K562 (cell line): ENCODE measurements at regions of chr9 and their contacts with region 1.

Region 1: GRCh38 chr9:20209391-20210340 is 412.6 kb downstream of the MLLT3 start:
- DNase-seq: no peak
- ATAC-seq: no peak
- H3K4me3 ChIP-seq: no peak overlapping the region
- H3K27ac ChIP-seq: no peak overlapping the region
- H3K4me1 ChIP-seq: no peaks in the 10 kb centered on the region
- H3K27me3 ChIP-seq: no peaks in the 10 kb centered on the region
- CTCF ChIP-seq: no peak
- EP300 ChIP-seq: no peak
- POLR2A ChIP-seq: no peak
- RAD21 ChIP-seq: no peak

Region 2: GRCh38 chr9:20065796-20066700 is 143.6 kb before region 1 on chr9:
- CTCF ChIA-PET with region 1: no interaction called
- POLR2A ChIA-PET with region 1: no interaction called
- in situ Hi-C with region 1: no loop called
- intact Hi-C with region 1: no loop called
- DNase-seq: no peak
- ATAC-seq: no peak
- H3K4me3 ChIP-seq: no peak overlapping the region
- H3K27ac ChIP-seq: no peak overlapping the region
- H3K4me1 ChIP-seq: no peaks in the 10 kb centered on the region
- H3K27me3 ChIP-seq: no peaks in the 10 kb centered on the region
- CTCF ChIP-seq: no peak
- EP300 ChIP-seq: no peak
- POLR2A ChIP-seq: no peak
- RAD21 ChIP-seq: no peak

Region 3: GRCh38 chr9:20152151-20152725 is 57.4 kb before region 1 on chr9:
- CTCF ChIA-PET with region 1: no interaction called
- POLR2A ChIA-PET with region 1: no interaction called
- in situ Hi-C with region 1: no loop called
- intact Hi-C with region 1: loop called (anchors 10 kb)
- DNase-seq: no peak
- ATAC-seq: no peak
- H3K4me3 ChIP-seq: no peak overlapping the region
- H3K27ac ChIP-seq: no peak overlapping the region
- H3K4me1 ChIP-seq: no peaks in the 10 kb centered on the region
- H3K27me3 ChIP-seq: no peaks in the 10 kb centered on the region
- CTCF ChIP-seq: no peak
- EP300 ChIP-seq: no peak
- POLR2A ChIP-seq: no peak
- RAD21 ChIP-seq: no peak

Region 4: GRCh38 chr9:20220286-20220685 is 10.6 kb after region 1 on chr9:
- CTCF ChIA-PET with region 1: no interaction called
- POLR2A ChIA-PET with region 1: no interaction called
- in situ Hi-C with region 1: no loop called
- intact Hi-C with region 1: no loop called
- DNase-seq: no peak
- ATAC-seq: no peak
- H3K4me3 ChIP-seq: no peak overlapping the region
- H3K27ac ChIP-seq: no peak overlapping the region
- H3K4me1 ChIP-seq: no peaks in the 10 kb centered on the region
- H3K27me3 ChIP-seq: no peaks in the 10 kb centered on the region
- CTCF ChIP-seq: no peak
- EP300 ChIP-seq: no peak
- POLR2A ChIP-seq: no peak
- RAD21 ChIP-seq: no peak